PC-9 (cell line): ENCODE measurements at regions of chr9 and their contacts with region 1.

Region 1: GRCh38 chr9:115071176-115071575 is 46.8 kb downstream of the TNC start:
- DNase-seq: peak in 1 of 2 experiments; percentile 4
- H3K4me3 ChIP-seq: no peak overlapping the region
- H3K27ac ChIP-seq: no peak overlapping the region
- H3K4me1 ChIP-seq: no peaks in the 10 kb centered on the region
- H3K27me3 ChIP-seq: no peaks in the 10 kb centered on the region
- CTCF ChIP-seq: no peak

Region 2: DNA sequence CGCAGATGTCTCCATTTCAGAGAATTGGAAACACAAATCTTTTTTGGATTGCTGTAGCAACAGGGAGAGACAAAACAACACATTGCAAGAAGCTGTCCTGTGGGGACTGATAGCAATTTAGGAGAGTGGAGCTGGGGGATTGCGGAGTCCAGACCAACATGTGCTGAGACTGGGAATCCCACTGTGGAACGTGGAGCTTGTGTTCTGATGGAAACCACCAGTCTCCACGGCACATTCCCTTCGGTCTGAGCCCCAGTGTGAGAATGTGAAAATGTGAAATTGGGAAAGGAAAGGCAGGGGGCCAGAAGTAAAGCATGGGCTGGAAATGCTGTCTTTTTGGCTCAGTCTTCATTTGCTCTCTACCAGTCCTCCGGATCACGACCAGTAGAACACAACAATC is 395.6 kb after region 1 on chr9:
- CTCF ChIA-PET with region 1: no interaction called
- POLR2A ChIA-PET with region 1: interaction called, 12 read pairs
- intact Hi-C with region 1: no loop called
- DNase-seq: no peak
- H3K4me3 ChIP-seq: no peak overlapping the region
- H3K27ac ChIP-seq: no peak overlapping the region
- H3K4me1 ChIP-seq: no peaks in the 10 kb centered on the region
- H3K27me3 ChIP-seq: no peaks in the 10 kb centered on the region
- CTCF ChIP-seq: no peak